WTC11 (cell line): ENCODE measurements at regions of chr12 and their contacts with region 1.

Region 1: GRCh38 chr12:100200463-100201181 is at the start of gene ACTR6:
- DNase-seq: peak; percentile 96
- ATAC-seq: peak; percentile 80
- H3K4me3 Mint-ChIP-seq: peak within 1 kb of the TSS; percentile 99
- H3K27ac Mint-ChIP-seq: peak within 1 kb of the TSS; percentile 96
- H3K4me1 Mint-ChIP-seq: peaks cover 12% of the 10 kb centered on the region; the same call in 1 of the 2 replicates
- H3K27me3 Mint-ChIP-seq: no peaks in the 10 kb centered on the region
- CTCF ChIP-seq: no peak
- total RNA-seq, gene ACTR6: 34.7 to 37.6 TPM (median 36.1 TPM) in 3 replicates

Region 2: GRCh38 chr12:100154474-100155247 is 46.0 kb before region 1 on chr12:
- CTCF ChIA-PET with region 1: interaction called, 23 read pairs
- POLR2A ChIA-PET with region 1: interaction called, 5 read pairs
- DNase-seq: peak; percentile 94
- ATAC-seq: peak; percentile 71
- H3K4me3 Mint-ChIP-seq: no peak overlapping the region
- H3K27ac Mint-ChIP-seq: no peak overlapping the region
- H3K4me1 Mint-ChIP-seq: peaks cover 38% of the 10 kb centered on the region
- H3K27me3 Mint-ChIP-seq: no peaks in the 10 kb centered on the region; the same call in 1 of the 2 replicates
- CTCF ChIP-seq: peak; percentile 94

Region 3: GRCh38 chr12:100266835-100267618 is 66.4 kb after region 1 on chr12 and contains the starts of genes DEPDC4 and SCYL2:
- CTCF ChIA-PET with region 1: interaction called, 4 read pairs
- POLR2A ChIA-PET with region 1: interaction called, 10 read pairs
- DNase-seq: peak; percentile 92
- ATAC-seq: peak; percentile 92
- H3K4me3 Mint-ChIP-seq: peak within 1 kb of the TSS; percentile 98
- H3K27ac Mint-ChIP-seq: peak within 1 kb of the TSS; percentile 99
- H3K4me1 Mint-ChIP-seq: peaks cover 20% of the 10 kb centered on the region
- H3K27me3 Mint-ChIP-seq: no peaks in the 10 kb centered on the region
- CTCF ChIP-seq: no peak
- total RNA-seq, gene DEPDC4: 4.4 to 5.5 TPM (median 5.5 TPM) in 3 replicates
- total RNA-seq, gene SCYL2: 33.4 to 37.1 TPM (median 33.8 TPM) in 3 replicates